Endothelial cell of umbilical vein (primary cell): ENCODE measurements at regions of chr14 and their contacts with region 1.

Region 1: DNA sequence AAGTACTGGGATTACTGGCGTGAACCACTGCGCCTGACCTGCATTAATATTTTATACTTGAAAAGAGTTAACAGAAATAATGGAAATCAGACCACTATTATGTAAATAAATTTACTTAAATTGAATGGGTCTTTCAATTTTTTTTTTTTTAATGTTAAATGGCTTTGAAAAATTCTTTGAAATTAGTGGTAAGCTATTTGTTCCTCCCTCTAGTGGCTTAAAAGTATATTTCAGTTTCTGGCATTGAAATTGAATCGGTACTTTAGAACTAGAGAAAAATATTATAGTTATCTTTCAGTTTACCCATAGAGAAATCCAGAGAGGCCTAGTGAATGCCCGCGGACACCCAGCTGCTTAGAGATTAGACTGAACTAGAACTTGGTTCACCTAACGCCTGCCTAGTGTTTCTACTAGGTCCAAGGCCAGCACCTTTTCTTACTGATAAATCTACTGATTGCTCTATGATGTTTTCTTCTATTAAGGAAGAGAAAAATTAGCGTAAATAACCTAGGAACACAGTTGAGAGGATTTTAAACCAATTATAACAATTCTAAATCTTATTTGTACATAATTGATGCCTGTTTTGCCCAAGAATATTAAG is 106.5 kb downstream of the EML1 start:
- DNase-seq: peak; percentile 45
- H3K4me3 ChIP-seq: no peak overlapping the region
- H3K27ac ChIP-seq: no peak overlapping the region
- H3K4me1 ChIP-seq: no peaks in the 10 kb centered on the region
- H3K27me3 ChIP-seq: no peaks in the 10 kb centered on the region
- CTCF ChIP-seq: peak; percentile 21 to 29
- POLR2A ChIP-seq: no peak

Region 2: DNA sequence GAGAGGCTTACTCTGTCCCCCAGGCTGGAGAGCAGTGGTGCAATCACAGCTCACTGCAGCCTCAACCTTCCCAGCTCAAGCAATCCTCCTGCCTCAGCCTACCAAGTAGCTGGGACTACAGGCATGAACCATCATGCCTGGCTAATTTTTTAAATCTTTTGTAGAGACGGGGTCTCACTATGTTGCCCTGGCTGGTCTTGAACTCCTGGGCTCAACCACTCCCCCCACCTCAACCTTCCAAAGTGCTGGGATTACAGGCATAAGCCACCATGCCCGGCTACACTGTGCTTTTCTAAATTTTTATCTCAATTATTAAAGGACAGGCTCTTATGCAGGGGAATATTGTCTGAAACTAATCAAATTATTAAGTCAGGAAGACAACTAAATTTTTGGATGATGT is 61.9 kb before region 1 on chr14:
- CTCF ChIA-PET with region 1: interaction called, 11 read pairs
- POLR2A ChIA-PET with region 1: no interaction called
- dilution Hi-C with region 1: no loop called
- intact Hi-C with region 1: no loop called
- DNase-seq: no peak
- H3K4me3 ChIP-seq: no peak overlapping the region
- H3K27ac ChIP-seq: no peak overlapping the region
- H3K4me1 ChIP-seq: no peaks in the 10 kb centered on the region
- H3K27me3 ChIP-seq: no peaks in the 10 kb centered on the region
- CTCF ChIP-seq: no peak
- POLR2A ChIP-seq: no peak

Region 3: DNA sequence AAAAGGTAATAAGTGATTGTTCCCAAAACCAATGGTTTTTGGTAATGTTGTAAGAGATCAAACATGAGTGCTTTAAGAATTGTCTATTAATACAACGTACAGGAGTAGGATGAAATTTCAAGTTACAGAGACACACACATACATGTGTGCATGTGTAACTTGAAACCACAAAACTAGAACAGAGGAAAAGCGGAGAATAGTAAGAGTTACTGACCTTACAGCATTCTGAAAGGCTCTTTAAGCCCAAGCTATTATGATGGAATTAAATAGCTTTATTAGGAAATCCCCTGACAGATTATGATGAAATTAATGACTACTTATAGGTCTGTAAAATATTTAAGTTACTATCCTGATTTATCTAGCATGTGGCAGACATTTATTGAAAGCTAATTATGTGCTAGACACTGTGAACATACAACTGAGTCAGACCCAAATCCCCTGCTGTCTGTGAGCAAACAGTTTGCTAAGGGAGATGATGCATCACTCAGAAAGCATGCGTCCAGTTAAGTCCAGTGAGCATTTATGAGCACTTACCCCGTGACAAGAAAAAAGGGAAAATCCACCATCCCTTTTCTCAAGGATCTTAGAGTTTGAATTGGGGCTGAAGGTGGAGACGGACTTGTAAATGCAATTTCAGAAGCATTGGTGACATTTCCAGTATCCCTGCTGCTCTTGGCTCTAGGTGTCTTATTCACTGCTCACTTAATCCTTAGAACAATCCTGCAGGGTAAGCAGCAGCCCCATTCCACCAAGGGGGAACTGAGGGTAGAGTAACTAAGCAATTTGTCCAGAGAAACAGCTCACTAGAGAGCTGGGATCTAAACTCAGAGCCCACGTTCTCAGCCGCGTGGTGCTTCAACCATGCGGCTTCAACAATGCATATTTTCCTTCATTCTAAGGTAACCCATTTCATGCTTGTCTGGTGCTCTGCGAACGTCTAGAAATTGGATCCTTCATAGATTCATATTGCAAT is 10.9 kb after region 1 on chr14:
- CTCF ChIA-PET with region 1: interaction called, 17 read pairs
- POLR2A ChIA-PET with region 1: no interaction called
- dilution Hi-C with region 1: no loop called
- intact Hi-C with region 1: no loop called
- DNase-seq: no peak
- H3K4me3 ChIP-seq: no peak overlapping the region
- H3K27ac ChIP-seq: no peak overlapping the region
- H3K4me1 ChIP-seq: no peaks in the 10 kb centered on the region
- H3K27me3 ChIP-seq: no peaks in the 10 kb centered on the region
- CTCF ChIP-seq: no peak
- POLR2A ChIP-seq: no peak

Region 4: DNA sequence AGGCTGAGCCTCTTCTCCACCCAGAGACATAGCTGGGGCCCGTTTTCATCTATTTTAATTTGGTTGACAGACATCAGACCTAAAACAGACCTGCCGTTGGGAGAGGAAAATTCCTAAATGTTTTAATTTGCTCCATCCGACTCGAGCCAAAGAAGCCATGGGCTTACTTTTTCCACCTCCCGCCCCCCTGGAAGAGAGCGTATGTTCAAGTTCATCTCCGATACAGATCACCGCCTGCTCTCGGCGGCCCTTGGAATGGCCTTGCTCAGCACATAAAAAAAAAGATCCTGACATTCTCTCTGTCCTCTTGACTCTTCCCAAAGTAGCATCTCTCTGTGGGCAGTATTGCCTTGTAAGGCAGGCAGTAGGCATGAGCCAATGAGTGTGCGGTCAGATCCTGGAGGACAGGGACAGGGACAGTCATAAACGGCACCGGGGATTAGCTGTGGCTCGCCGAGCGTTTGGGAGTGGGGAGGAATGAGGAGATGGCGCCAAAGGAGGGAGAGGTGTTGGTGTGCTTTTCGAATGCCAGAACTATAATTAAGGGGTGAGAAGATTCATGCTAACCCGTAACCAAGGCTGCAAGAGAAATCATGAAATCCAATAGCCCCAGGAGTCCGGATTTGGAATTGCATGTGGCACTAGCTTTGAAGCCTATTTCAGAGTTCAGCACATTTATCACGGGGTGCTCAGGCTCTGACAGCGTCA is 878.3 kb after region 1 on chr14:
- CTCF ChIA-PET with region 1: no interaction called
- POLR2A ChIA-PET with region 1: no interaction called
- dilution Hi-C with region 1: no loop called
- intact Hi-C with region 1: no loop called
- DNase-seq: no peak
- H3K4me3 ChIP-seq: no peak overlapping the region
- H3K27ac ChIP-seq: no peak overlapping the region
- H3K4me1 ChIP-seq: no peaks in the 10 kb centered on the region
- H3K27me3 ChIP-seq: no peaks in the 10 kb centered on the region
- CTCF ChIP-seq: no peak
- POLR2A ChIP-seq: no peak